ENCODE measurements at regions of chr1 and their contacts with region 1.

Region 1: GRCh38 chr1:13828454-13829151 is 128.6 kb downstream of the PRDM2 start:
- DNase-seq: no peak
- ATAC-seq: peak; percentile 82
- H3K4me3 ChIP-seq: no peak overlapping the region
- H3K27ac ChIP-seq: no peak overlapping the region
- H3K4me1 ChIP-seq: peaks cover 3% of the 10 kb centered on the region; the same call in 1 of the 2 replicates
- H3K27me3 ChIP-seq: no peaks in the 10 kb centered on the region
- CTCF ChIP-seq: peak; percentile 78

Region 2: DNA sequence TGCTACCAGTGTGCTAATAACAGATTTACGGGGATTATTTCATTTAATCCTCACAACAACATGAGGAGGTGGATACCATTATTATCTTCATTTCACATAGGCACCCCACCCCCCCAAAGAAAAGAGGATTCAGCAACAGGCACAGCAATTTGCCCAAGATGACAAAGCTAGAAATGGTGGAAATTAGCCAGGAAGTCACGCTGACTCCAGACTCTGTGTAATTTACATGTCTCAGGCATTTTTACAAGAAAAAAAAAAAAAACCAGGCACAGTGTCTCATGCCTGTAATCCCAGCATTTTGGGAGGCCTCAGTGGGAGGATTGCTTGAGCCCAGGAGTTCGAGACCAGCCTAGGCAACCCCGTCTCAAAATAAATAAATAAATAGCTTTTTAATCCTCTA is 166.1 kb before region 1 on chr1:
- CTCF ChIA-PET with region 1: interaction called, 10 read pairs
- POLR2A ChIA-PET with region 1: no interaction called
- in situ Hi-C with region 1: no loop called
- intact Hi-C with region 1: no loop called
- DNase-seq: no peak
- ATAC-seq: no peak
- H3K4me3 ChIP-seq: no peak overlapping the region
- H3K27ac ChIP-seq: no peak overlapping the region
- H3K4me1 ChIP-seq: no peaks in the 10 kb centered on the region
- H3K27me3 ChIP-seq: no peaks in the 10 kb centered on the region
- CTCF ChIP-seq: no peak

Region 3: DNA sequence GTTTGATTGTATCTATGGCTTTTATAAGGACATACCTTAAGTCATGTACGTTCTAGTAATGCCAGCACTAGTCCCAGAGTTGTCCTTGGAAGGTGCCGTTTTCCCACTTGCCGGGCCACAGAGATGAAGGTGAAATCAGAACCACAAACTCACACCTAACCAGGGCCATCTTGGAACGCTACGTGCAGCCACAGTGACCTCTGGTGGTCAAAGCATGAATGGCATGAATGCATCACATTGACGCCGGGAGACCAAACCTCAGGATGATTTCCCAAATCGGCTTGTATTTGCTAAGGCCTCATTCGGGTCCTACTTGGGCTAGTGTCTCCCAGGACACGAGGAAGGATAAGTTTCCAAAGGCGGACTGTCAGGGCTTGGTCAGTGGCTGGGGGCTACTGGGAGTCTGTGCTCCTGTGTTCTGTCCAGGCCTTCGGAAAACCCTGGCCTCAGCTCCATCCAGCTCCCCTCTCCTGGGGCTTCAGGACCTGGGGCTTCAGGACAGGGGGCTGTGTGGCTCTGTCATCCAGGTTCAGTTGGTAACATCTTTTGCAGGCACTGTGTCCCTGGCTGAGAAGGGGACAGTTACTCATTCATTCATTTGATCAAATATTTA is 131.9 kb after region 1 on chr1:
- CTCF ChIA-PET with region 1: interaction called, 4 read pairs
- POLR2A ChIA-PET with region 1: no interaction called
- in situ Hi-C with region 1: no loop called
- intact Hi-C with region 1: loop called (anchors 2 kb)
- DNase-seq: peak; percentile 73
- ATAC-seq: peak; percentile 86
- H3K4me3 ChIP-seq: no peak overlapping the region
- H3K27ac ChIP-seq: no peak overlapping the region
- H3K4me1 ChIP-seq: no peaks in the 10 kb centered on the region
- H3K27me3 ChIP-seq: peaks cover 2% of the 10 kb centered on the region; the same call in 1 of the 2 replicates
- CTCF ChIP-seq: peak; percentile 95